Breast epithelium (tissue), 4 donors: ENCODE measurements at regions of chr11 and their contacts with region 1.

Region 1: DNA sequence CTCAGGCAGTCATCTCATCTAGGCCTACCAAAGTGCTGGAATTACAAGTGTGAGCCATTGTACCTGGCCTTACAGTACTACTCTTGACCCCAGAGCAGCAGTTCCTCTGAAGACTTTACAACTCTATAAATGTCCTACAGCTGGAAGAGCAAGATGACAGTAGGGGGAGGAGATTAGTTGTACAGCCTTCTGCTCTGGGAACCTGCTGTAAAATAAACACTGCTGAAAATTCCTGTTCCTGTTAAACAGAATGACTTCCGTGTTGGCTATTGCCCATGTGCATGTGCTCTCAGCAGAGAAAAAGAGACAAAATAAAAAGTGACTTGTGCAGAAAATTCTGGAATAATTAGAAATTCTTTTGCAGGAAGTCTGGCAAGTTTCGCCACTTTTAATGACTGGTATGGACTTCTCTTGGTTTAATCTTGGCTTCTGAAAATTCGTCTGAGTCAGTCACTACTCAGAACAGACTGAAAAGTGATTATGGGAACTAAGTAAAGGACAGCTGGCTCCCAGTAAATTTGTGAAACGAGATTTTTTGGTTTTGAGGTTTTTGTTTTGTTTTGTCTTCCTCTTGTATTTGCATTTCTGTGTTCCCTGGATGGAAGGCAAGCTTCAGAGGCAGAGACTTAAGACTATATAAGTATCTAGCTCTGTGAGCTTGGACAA is 955.7 kb downstream of the DLG2 start:
- DNase-seq: no peak
- H3K4me3 ChIP-seq: no peak overlapping the region
- H3K27ac ChIP-seq: no peak overlapping the region
- H3K4me1 ChIP-seq: no peaks in the 10 kb centered on the region
- H3K27me3 ChIP-seq: no peaks in the 10 kb centered on the region
- CTCF ChIP-seq: no peak
- POLR2A ChIP-seq: no peak

Region 2: GRCh38 chr11:83656931-83657330 is 1014.5 kb before region 1 on chr11:
- intact Hi-C with region 1: loop called (anchors 5 kb)
- DNase-seq: no peak
- H3K4me3 ChIP-seq: no peak overlapping the region
- H3K27ac ChIP-seq: no peak overlapping the region
- H3K4me1 ChIP-seq: no peaks in the 10 kb centered on the region
- H3K27me3 ChIP-seq: no peaks in the 10 kb centered on the region
- CTCF ChIP-seq: no peak
- POLR2A ChIP-seq: no peak

Region 3: DNA sequence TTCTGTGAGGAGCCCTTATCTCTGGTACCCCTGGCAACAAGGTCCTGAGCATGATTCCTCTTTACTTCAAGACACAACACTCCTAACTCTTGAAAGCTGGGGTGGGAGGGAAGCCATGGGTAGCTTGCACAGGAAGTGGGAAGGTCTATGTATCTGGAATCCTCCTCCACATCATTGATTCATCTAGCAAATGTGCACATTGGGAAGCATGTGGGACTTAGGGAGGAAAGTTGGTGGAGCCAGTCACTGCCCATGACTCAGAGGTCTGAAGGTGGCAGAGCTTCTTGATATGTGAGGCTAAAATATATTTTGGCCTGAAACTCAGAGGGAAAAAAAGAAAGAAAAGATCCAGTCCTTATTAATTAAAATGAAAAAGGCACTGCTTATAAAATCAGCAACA is 45.2 kb before region 1 on chr11:
- intact Hi-C with region 1: no loop called
- DNase-seq: no peak
- H3K4me3 ChIP-seq: no peak overlapping the region
- H3K27ac ChIP-seq: no peak overlapping the region
- H3K4me1 ChIP-seq: no peaks in the 10 kb centered on the region
- H3K27me3 ChIP-seq: no peaks in the 10 kb centered on the region
- CTCF ChIP-seq: no peak
- POLR2A ChIP-seq: no peak

Region 4: GRCh38 chr11:84691830-84692229 is 20.4 kb after region 1 on chr11:
- intact Hi-C with region 1: no loop called
- DNase-seq: no peak
- H3K4me3 ChIP-seq: no peak overlapping the region
- H3K27ac ChIP-seq: no peak overlapping the region
- H3K4me1 ChIP-seq: no peaks in the 10 kb centered on the region
- H3K27me3 ChIP-seq: no peaks in the 10 kb centered on the region
- CTCF ChIP-seq: no peak
- POLR2A ChIP-seq: no peak

Region 5: DNA sequence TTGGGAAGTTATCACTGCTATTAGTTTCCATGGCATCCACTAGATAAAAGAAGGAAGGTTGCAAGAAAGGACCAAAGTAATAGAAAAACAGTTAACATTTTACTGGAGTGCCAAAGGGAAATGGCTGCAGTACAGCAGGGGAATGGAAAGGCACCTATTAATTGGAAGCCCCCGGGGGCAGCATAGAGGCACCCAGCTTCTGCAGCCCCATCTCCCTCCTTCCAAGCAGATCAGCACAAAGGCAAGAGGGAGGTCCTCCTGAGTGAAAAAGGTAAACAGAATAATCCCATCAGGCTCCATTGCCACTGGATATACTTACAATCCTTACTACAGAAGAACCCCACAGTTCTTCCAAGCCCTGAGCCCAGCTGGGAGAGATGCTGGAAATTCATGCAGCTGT is 68.6 kb after region 1 on chr11:
- intact Hi-C with region 1: loop called (anchors 2 kb)
- DNase-seq: no peak
- H3K4me3 ChIP-seq: no peak overlapping the region
- H3K27ac ChIP-seq: no peak overlapping the region
- H3K4me1 ChIP-seq: no peaks in the 10 kb centered on the region
- H3K27me3 ChIP-seq: no peaks in the 10 kb centered on the region
- CTCF ChIP-seq: no peak
- POLR2A ChIP-seq: no peak